Tibial artery (tissue), 4 donors: ENCODE measurements at regions of chrX and their contacts with region 1.

Region 1: GRCh38 chrX:118588715-118589114 is 93.1 kb downstream of the DOCK11 start:
- DNase-seq: no peak
- H3K4me3 ChIP-seq: no peak overlapping the region
- H3K27ac ChIP-seq: no peak overlapping the region
- H3K4me1 ChIP-seq: no peaks in the 10 kb centered on the region
- H3K27me3 ChIP-seq: no peaks in the 10 kb centered on the region
- CTCF ChIP-seq: no peak

Region 2: GRCh38 chrX:118474586-118474985 is 114.1 kb before region 1 on chrX:
- intact Hi-C with region 1: loop called (anchors 10 kb)
- DNase-seq: no peak
- H3K4me3 ChIP-seq: no peak overlapping the region
- H3K27ac ChIP-seq: no peak overlapping the region
- H3K4me1 ChIP-seq: no peaks in the 10 kb centered on the region
- H3K27me3 ChIP-seq: no peaks in the 10 kb centered on the region
- CTCF ChIP-seq: no peak

Region 3: GRCh38 chrX:118644378-118644777 is 55.7 kb after region 1 on chrX:
- intact Hi-C with region 1: no loop called
- DNase-seq: no peak
- H3K4me3 ChIP-seq: no peak overlapping the region
- H3K27ac ChIP-seq: no peak overlapping the region
- H3K4me1 ChIP-seq: no peaks in the 10 kb centered on the region
- H3K27me3 ChIP-seq: no peaks in the 10 kb centered on the region
- CTCF ChIP-seq: peak; percentile 25 to 38